ENCODE measurements at regions of chr7 and their contacts with region 1.

Region 1: GRCh38 chr7:157238087-157238486 is 98.7 kb upstream of the DNAJB6 start:
- DNase-seq: no peak
- ATAC-seq: no peak
- H3K4me3 Mint-ChIP-seq: no peak overlapping the region
- H3K27ac Mint-ChIP-seq: no peak overlapping the region
- H3K4me1 Mint-ChIP-seq: no peaks in the 10 kb centered on the region
- H3K27me3 Mint-ChIP-seq: no peaks in the 10 kb centered on the region
- CTCF ChIP-seq: no peak

Region 2: DNA sequence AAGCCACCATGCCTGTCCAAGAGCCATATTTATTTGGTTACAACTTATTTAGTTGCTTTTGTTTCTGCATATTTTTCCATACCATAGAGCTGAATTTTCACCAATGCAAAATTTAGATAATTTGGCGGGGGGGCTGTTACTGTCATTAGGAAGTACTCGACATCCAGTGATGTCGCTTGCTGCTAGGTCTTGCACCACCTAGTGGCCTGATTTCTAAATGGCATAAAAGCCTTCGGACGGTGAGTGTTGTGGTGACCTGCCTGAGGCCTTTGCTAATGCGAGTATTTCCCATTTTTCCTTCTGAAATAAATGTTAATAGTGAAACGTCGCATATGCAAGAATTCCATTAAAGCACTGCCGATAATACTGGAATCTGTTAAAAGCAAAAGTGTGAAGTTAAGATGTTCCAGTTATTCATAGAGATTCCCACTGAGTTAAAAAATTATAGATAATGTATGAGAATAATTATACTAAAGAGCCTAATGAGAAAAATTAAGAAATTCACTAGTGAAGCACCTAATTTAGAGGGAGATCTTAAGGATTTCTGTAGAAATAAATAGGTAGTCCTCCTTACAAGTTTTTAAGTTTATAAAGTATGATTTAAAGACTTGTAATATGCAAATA is 12.6 kb after region 1 on chr7:
- CTCF ChIA-PET with region 1: interaction called, 10 read pairs
- POLR2A ChIA-PET with region 1: no interaction called
- intact Hi-C with region 1: no loop called
- DNase-seq: peak; percentile 66
- ATAC-seq: peak; percentile 74
- H3K4me3 Mint-ChIP-seq: no peak overlapping the region
- H3K27ac Mint-ChIP-seq: no peak overlapping the region
- H3K4me1 Mint-ChIP-seq: no peaks in the 10 kb centered on the region
- H3K27me3 Mint-ChIP-seq: no peaks in the 10 kb centered on the region
- CTCF ChIP-seq: peak; percentile 86

Measured in activated CD8-positive, alpha-beta T cell treated with anti-CD3 and anti-CD28 coated beads for 36 hours (primary cell).